CD8-positive, alpha-beta T cell (primary cell): ENCODE measurements at regions of chr2 and their contacts with region 1.

Region 1: GRCh38 chr2:109031476-109032228 is 42.6 kb upstream of the EDAR start:
- DNase-seq: peak; percentile 48 to 94 (median 77)
- ATAC-seq: peak; percentile 74
- H3K4me3 ChIP-seq: peak overlapping the region; percentile 49 to 60
- H3K4me3 Mint-ChIP-seq: peak overlapping the region; percentile 76
- H3K27ac ChIP-seq: peak overlapping the region; percentile 76 to 82
- H3K27ac Mint-ChIP-seq: peak overlapping the region; percentile 90
- H3K4me1 ChIP-seq: peaks cover 75% of the 10 kb centered on the region
- H3K4me1 Mint-ChIP-seq: peaks cover 68% of the 10 kb centered on the region
- H3K27me3 ChIP-seq: no peaks in the 10 kb centered on the region
- H3K27me3 Mint-ChIP-seq: no peaks in the 10 kb centered on the region
- CTCF ChIP-seq: no peak

Region 2: DNA sequence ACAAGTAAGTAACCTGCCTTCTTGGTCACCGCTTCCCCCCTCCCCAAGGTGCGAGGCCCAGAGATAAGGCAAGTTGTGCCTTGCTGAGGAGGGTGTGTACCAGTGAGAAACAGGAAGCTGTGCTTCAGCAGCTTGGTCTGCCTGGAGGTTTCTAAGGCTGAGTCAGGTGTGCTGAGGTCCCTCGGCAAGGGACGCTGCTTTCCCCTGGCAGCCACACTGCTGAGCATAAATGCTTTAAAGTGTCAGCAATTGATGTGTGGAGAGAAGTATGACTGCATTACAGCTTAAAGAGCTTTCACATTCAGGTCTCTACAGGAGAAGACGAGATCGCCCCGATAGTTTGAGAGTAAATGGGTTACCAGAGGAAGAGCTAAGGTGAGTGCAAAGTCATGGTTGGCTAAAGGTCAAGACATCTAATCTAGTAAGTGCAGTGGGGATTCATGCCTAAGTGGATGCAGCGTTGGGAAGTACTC is 410.5 kb before region 1 on chr2:
- CTCF ChIA-PET with region 1: no interaction called
- POLR2A ChIA-PET with region 1: no interaction called
- intact Hi-C with region 1: loop called in 1 of 2 experiments (anchors 10 kb)
- DNase-seq: peak; percentile 38 to 87 (median 76)
- ATAC-seq: peak; percentile 93
- H3K4me3 ChIP-seq: peak overlapping the region; percentile 27 to 47
- H3K4me3 Mint-ChIP-seq: peak overlapping the region; percentile 85
- H3K27ac ChIP-seq: peak overlapping the region; percentile 44 to 79
- H3K27ac Mint-ChIP-seq: peak overlapping the region; percentile 95
- H3K4me1 ChIP-seq: peaks cover 55% of the 10 kb centered on the region
- H3K4me1 Mint-ChIP-seq: peaks cover 83% of the 10 kb centered on the region
- H3K27me3 ChIP-seq: no peaks in the 10 kb centered on the region
- H3K27me3 Mint-ChIP-seq: no peaks in the 10 kb centered on the region
- CTCF ChIP-seq: no peak

Region 3: GRCh38 chr2:108825254-108825653 is 206.4 kb before region 1 on chr2:
- CTCF ChIA-PET with region 1: no interaction called
- POLR2A ChIA-PET with region 1: no interaction called
- intact Hi-C with region 1: no loop called
- DNase-seq: no peak
- ATAC-seq: no peak
- H3K4me3 ChIP-seq: no peak overlapping the region
- H3K4me3 Mint-ChIP-seq: no peak overlapping the region
- H3K27ac ChIP-seq: no peak overlapping the region
- H3K27ac Mint-ChIP-seq: no peak overlapping the region
- H3K4me1 ChIP-seq: no peaks in the 10 kb centered on the region
- H3K4me1 Mint-ChIP-seq: no peaks in the 10 kb centered on the region
- H3K27me3 ChIP-seq: no peaks in the 10 kb centered on the region
- H3K27me3 Mint-ChIP-seq: no peaks in the 10 kb centered on the region
- CTCF ChIP-seq: no peak

Region 4: GRCh38 chr2:108927936-108928659 is 103.6 kb before region 1 on chr2:
- CTCF ChIA-PET with region 1: interaction called, 23 read pairs
- POLR2A ChIA-PET with region 1: interaction called, 12 read pairs
- intact Hi-C with region 1: loop called in 1 of 2 experiments (anchors 1 kb)
- DNase-seq: peak in 8 of 9 experiments; percentile 11 to 69 (median 48)
- ATAC-seq: peak; percentile 49
- H3K4me3 ChIP-seq: no peak overlapping the region
- H3K4me3 Mint-ChIP-seq: no peak overlapping the region
- H3K27ac ChIP-seq: no peak overlapping the region
- H3K27ac Mint-ChIP-seq: no peak overlapping the region
- H3K4me1 ChIP-seq: peaks cover 5% of the 10 kb centered on the region
- H3K4me1 Mint-ChIP-seq: peaks cover 9% of the 10 kb centered on the region
- H3K27me3 ChIP-seq: no peaks in the 10 kb centered on the region
- H3K27me3 Mint-ChIP-seq: no peaks in the 10 kb centered on the region
- CTCF ChIP-seq: peak; percentile 97

Region 5: GRCh38 chr2:109005686-109006204 is 25.9 kb before region 1 on chr2:
- CTCF ChIA-PET with region 1: interaction called, 4 read pairs
- POLR2A ChIA-PET with region 1: interaction called, 13 read pairs
- intact Hi-C with region 1: no loop called
- DNase-seq: no peak
- ATAC-seq: no peak
- H3K4me3 ChIP-seq: no peak overlapping the region
- H3K4me3 Mint-ChIP-seq: no peak overlapping the region
- H3K27ac ChIP-seq: no peak overlapping the region
- H3K27ac Mint-ChIP-seq: no peak overlapping the region
- H3K4me1 ChIP-seq: peaks cover 13% of the 10 kb centered on the region
- H3K4me1 Mint-ChIP-seq: peaks cover 32% of the 10 kb centered on the region
- H3K27me3 ChIP-seq: no peaks in the 10 kb centered on the region
- H3K27me3 Mint-ChIP-seq: no peaks in the 10 kb centered on the region
- CTCF ChIP-seq: no peak

Region 6: GRCh38 chr2:109057686-109058085 is 26.0 kb after region 1 on chr2:
- CTCF ChIA-PET with region 1: interaction called, 3 read pairs
- POLR2A ChIA-PET with region 1: interaction called, 39 read pairs
- intact Hi-C with region 1: loop called in 1 of 2 experiments (anchors 2 kb)
- DNase-seq: peak in 8 of 9 experiments; percentile 17 to 77 (median 40)
- ATAC-seq: peak; percentile 98
- H3K4me3 ChIP-seq: no peak overlapping the region
- H3K4me3 Mint-ChIP-seq: peak overlapping the region; percentile 38
- H3K27ac ChIP-seq: no peak overlapping the region
- H3K27ac Mint-ChIP-seq: peak overlapping the region; percentile 90
- H3K4me1 ChIP-seq: peaks cover 26% of the 10 kb centered on the region
- H3K4me1 Mint-ChIP-seq: peaks cover 44% of the 10 kb centered on the region
- H3K27me3 ChIP-seq: no peaks in the 10 kb centered on the region
- H3K27me3 Mint-ChIP-seq: no peaks in the 10 kb centered on the region
- CTCF ChIP-seq: no peak

Region 7: GRCh38 chr2:109128048-109128465 is 96.4 kb after region 1 on chr2:
- CTCF ChIA-PET with region 1: interaction called, 9 read pairs
- POLR2A ChIA-PET with region 1: interaction called, 38 read pairs
- intact Hi-C with region 1: loop called (anchors 1 to 5 kb)
- DNase-seq: peak; percentile 38 to 83 (median 63)
- ATAC-seq: peak; percentile 54
- H3K4me3 ChIP-seq: peak overlapping the region; percentile 57 to 89
- H3K4me3 Mint-ChIP-seq: peak overlapping the region; percentile 84
- H3K27ac ChIP-seq: peak overlapping the region in 1 of 2 experiments; percentile 47
- H3K27ac Mint-ChIP-seq: peak overlapping the region; percentile 66
- H3K4me1 ChIP-seq: peaks cover 19% of the 10 kb centered on the region
- H3K4me1 Mint-ChIP-seq: peaks cover 48% of the 10 kb centered on the region
- H3K27me3 ChIP-seq: peaks cover 0 to 16% of the 10 kb centered on the region in 2 experiments
- H3K27me3 Mint-ChIP-seq: peaks cover 9% of the 10 kb centered on the region
- CTCF ChIP-seq: peak; percentile 86